Esophagus muscularis mucosa (tissue), 4 donors: ENCODE measurements at regions of chr20 and their contacts with region 1.

Region 1: GRCh38 chr20:62668441-62669027 is 26.2 kb downstream of the SLCO4A1 start:
- DNase-seq: no peak
- H3K4me3 ChIP-seq: no peak overlapping the region
- H3K27ac ChIP-seq: no peak overlapping the region
- H3K4me1 ChIP-seq: peaks cover 14 to 24% (median 16%) of the 10 kb centered on the region in 4 donors
- H3K27me3 ChIP-seq: peaks cover 0 to 22% (median under 1%) of the 10 kb centered on the region in 4 donors
- CTCF ChIP-seq: peak; percentile 88 to 95 (median 91)
- EP300 ChIP-seq: no peak
- POLR2A ChIP-seq: no peak

Region 2: DNA sequence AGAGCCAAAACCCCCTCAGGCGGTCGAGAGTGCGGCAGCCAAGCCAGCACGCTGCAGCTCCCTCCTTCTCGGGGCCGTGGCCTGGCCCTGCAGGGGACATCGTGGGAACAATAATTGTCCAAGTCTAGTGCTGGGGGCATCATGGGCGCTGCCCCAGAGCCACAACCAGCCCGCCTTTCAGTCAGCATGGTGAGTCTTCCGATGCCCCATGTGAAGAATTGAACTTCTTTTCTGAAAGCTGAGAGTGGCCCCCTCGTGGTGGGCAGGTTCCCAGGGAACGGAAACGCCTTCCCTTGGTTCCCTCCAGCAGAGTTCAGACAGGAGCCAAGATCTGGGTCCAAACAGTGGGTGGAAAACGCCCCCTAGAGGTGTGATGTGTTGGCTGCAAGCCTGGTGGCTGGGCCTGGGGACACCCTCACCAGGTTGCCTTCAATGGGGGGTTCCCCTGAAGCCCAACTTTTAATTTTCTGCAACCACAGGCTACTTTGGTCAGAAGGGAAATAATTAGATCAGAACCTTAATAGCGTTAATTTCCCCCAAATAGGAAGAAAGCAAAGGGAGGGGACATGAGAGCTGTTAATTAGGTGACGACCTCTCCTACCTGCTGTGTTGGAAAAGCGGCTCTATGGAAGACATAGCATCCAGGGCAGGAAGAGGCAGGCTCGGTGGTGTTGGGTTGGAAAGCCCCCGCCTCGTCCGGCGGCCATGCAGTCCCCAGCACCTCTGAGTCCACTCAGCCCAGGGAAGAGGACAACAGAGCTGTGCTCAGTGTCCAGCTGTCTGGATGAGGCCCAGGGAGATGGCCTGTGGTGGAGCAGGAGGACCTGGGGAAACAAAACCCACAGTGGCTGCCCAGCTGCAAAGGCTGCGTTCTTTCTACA is 123.0 kb after region 1 on chr20:
- intact Hi-C with region 1: loop called (anchors 1 kb)
- DNase-seq: no peak
- H3K4me3 ChIP-seq: no peak overlapping the region
- H3K27ac ChIP-seq: no peak overlapping the region
- H3K4me1 ChIP-seq: peaks cover 4 to 36% (median 26%) of the 10 kb centered on the region in 4 donors
- H3K27me3 ChIP-seq: peaks cover 0 to 2% (median 0%) of the 10 kb centered on the region in 4 donors
- CTCF ChIP-seq: peak; percentile 92 to 98 (median 94)
- EP300 ChIP-seq: no peak
- POLR2A ChIP-seq: no peak

Region 3: DNA sequence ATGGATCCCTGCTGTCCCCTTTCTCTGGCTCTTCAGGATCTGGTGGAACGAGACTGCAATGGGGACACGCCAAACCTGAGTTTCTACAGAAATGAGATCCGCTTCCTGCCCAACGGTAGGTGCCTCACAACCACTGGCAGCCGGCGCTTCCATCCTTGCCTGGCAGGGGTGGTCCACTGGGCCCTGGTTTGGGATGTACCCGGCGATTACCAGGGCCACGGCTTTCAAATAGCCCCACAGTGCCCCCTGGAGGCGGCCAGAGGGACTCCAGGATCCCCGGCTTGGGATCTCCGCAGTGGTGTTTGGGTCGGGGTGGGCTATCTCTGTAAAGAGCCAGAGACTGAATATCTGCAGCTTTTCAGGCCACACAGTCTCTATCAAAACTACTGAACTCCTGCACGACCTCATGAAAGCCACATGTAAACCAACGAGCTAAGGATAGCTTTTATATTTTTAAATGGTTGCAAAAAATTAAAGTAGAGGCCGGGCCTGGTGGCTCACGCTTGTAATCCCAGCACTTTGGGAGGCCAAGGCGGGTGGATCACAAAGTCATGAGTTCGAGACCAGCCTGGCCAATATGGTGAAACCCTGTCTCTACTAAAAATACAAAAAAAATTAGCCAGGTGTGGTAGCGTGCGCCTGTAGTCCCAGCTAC is 139.8 kb after region 1 on chr20:
- intact Hi-C with region 1: loop called (anchors 2 kb)
- DNase-seq: no peak
- H3K4me3 ChIP-seq: no peak overlapping the region
- H3K27ac ChIP-seq: no peak overlapping the region
- H3K4me1 ChIP-seq: peaks cover 29 to 40% (median 38%) of the 10 kb centered on the region in 4 donors
- H3K27me3 ChIP-seq: no peaks in the 10 kb centered on the region
- CTCF ChIP-seq: peak; percentile 92 to 93 (median 93)
- EP300 ChIP-seq: no peak
- POLR2A ChIP-seq: no peak